ENCODE measurements at regions of chr7 and their contacts with region 1.

Region 1: DNA sequence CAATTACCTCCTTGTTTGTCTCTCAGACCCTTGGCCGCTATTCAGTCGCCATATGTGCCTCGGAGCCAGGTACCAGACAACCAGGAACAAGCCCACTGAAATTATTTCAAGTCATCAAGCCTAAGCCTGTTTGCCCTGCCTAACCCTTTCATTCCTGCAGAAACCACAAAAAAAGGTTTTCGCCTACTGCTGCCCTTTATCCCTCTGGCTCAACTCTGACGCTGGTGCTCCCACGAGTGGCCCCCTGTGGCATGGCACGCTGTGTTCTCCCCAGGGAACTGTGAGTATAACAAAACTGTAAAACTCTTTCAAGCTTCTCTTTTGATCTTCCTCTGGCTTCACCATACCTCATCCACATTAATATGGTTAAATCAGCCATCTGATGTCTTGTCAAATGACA is 215.7 kb upstream of the CDC14C start:
- DNase-seq: peak in 1 of 2 donors; percentile 59
- H3K4me3 ChIP-seq: no peak overlapping the region
- H3K27ac ChIP-seq: peak overlapping the region in 1 of 2 donors; percentile 32
- H3K4me1 ChIP-seq: no peaks in the 10 kb centered on the region
- H3K27me3 ChIP-seq: no peaks in the 10 kb centered on the region
- CTCF ChIP-seq: no peak
- POLR2A ChIP-seq: no peak

Region 2: GRCh38 chr7:47379629-47380324 is 1328.9 kb before region 1 on chr7:
- intact Hi-C with region 1: no loop called
- DNase-seq: peak in 1 of 2 donors; percentile 36
- H3K4me3 ChIP-seq: peak overlapping the region in 2 of 3 donors; percentile 19 to 21
- H3K27ac ChIP-seq: peak overlapping the region; percentile 50 to 54
- H3K4me1 ChIP-seq: peaks cover 0 to 15% of the 10 kb centered on the region in 2 donors
- H3K27me3 ChIP-seq: no peaks in the 10 kb centered on the region
- CTCF ChIP-seq: no peak
- POLR2A ChIP-seq: no peak

Region 3: DNA sequence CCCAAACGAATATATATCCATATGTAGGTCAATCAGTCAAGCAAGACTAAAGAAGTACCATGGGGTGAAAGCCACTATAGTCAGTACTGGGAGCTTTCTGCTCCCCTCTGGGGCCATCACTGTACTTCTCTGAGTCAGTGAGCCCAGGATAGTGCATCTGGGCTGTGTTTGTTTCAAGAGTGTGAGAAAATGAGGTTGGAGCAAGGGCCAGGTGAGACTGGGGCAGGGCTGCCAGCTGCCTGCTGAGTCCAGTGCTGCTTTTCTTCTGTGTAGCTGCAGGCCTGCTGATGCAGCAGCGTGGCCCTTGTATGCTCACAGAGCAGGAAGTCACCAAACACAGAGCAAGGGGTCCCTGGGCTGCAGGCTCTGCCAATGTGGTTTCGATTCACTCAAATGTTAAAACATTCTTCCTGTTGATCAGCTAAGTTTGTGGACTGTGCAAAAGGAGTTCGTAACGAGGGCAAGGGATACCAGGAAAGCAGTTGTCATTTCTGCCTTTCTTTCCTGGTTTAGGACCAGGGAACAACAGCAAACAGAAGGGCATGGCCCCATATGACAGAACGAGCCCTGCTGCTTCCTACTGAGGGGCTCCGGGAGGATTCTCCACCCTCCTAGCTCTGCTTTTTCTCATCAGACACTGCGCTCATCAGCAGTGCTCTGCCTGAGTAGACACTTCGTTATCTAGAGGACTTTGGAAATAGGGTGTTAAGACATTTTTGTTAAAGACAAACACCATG is 1061.3 kb before region 1 on chr7:
- intact Hi-C with region 1: no loop called
- DNase-seq: no peak
- H3K4me3 ChIP-seq: no peak overlapping the region
- H3K27ac ChIP-seq: no peak overlapping the region
- H3K4me1 ChIP-seq: no peaks in the 10 kb centered on the region
- H3K27me3 ChIP-seq: no peaks in the 10 kb centered on the region
- CTCF ChIP-seq: no peak
- POLR2A ChIP-seq: no peak

Region 4: GRCh38 chr7:48540746-48541145 is 167.9 kb before region 1 on chr7:
- intact Hi-C with region 1: no loop called
- DNase-seq: no peak
- H3K4me3 ChIP-seq: no peak overlapping the region
- H3K27ac ChIP-seq: no peak overlapping the region
- H3K4me1 ChIP-seq: no peaks in the 10 kb centered on the region
- H3K27me3 ChIP-seq: no peaks in the 10 kb centered on the region
- CTCF ChIP-seq: no peak
- POLR2A ChIP-seq: no peak

Region 5: DNA sequence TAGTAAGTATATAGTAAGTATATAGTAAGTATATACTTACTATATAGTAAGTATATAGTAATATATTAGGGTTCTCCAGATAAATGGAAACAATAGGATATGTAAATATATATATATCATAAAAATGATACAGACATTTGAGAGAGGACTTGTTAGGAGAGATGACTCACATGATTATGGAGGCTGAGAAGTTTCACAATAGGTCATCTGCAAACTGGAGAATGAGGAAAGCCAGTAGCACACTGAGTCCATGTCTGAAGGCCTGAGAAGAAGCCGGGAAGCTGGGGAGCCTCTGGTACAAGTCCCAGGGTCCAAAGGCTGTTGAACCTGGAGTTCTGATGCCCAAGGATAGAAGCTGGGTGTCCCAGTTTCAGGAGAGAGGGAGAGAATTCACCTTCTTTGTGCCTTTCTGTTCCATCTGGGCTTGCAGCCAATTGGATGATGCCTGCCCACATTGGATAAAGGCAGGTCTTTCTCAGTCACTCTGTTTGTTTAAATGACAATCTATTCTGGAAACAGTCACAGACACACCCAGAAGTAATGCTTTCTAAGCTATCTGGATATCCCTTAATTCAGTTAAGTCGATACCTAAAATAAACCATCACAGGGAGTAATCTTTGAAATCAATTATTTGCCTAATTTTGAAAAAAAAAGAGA is 10.2 kb after region 1 on chr7:
- intact Hi-C with region 1: loop called (anchors 2 kb)
- DNase-seq: no peak
- H3K4me3 ChIP-seq: no peak overlapping the region
- H3K27ac ChIP-seq: no peak overlapping the region
- H3K4me1 ChIP-seq: no peaks in the 10 kb centered on the region
- H3K27me3 ChIP-seq: no peaks in the 10 kb centered on the region
- CTCF ChIP-seq: no peak
- POLR2A ChIP-seq: no peak

Region 6: GRCh38 chr7:49038821-49039358 is 330.3 kb after region 1 on chr7:
- intact Hi-C with region 1: no loop called
- DNase-seq: no peak
- H3K4me3 ChIP-seq: no peak overlapping the region
- H3K27ac ChIP-seq: no peak overlapping the region
- H3K4me1 ChIP-seq: no peaks in the 10 kb centered on the region
- H3K27me3 ChIP-seq: no peaks in the 10 kb centered on the region
- CTCF ChIP-seq: no peak
- POLR2A ChIP-seq: no peak